Activated CD4-positive, alpha-beta T cell treated with anti-CD3 and anti-CD28 coated beads, Interleukin-2, amount 10 ng/mL, durations not matched to agents 24 days and 14 days (primary cell): ENCODE measurements at regions of chr2 and their contacts with region 1.

Region 1: GRCh38 chr2:15560988-15561573 is at the start of gene NBAS:
- DNase-seq: peak; percentile 92
- H3K4me3 Mint-ChIP-seq: peak within 1 kb of the TSS; percentile 99
- H3K27ac Mint-ChIP-seq: peak within 1 kb of the TSS; percentile 94
- H3K4me1 Mint-ChIP-seq: peaks cover 31% of the 10 kb centered on the region
- H3K27me3 Mint-ChIP-seq: peaks cover 3% of the 10 kb centered on the region
- total RNA-seq, gene NBAS: 37.4 and 38.5 TPM in 2 replicates

Region 2: DNA sequence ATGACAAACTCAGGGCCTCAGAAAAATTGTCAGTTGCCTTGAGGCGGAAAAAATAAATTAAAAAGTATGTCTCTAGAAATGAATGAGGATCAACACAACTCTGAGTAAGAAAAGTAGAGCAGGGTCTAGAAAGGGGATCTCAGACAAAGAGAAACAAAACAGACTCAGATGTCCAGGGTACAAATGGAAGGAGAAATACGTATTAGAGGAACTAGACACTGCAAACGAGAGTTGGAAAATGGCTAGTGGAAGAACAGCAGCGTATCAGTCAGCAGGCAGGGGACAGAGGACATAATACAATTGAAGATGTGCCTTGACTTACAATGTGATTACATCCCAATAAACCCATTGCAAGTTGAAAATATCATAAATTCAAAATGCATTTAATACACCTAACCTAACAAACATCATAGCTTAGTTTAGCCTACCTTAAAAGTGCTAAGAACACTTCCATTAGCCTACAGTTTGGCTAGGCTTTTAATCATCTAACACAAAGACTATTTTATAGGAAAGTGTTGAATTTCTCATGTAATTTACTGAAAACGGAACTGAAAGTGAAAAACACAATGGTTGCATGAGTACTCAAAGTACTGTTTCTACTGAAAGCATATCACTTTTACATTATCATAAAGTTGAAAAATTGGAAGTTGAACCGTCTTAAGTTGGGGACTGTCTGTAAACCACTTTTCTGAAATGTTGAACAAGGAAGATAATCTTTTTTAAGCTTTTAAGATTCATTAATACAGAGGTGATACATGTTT is 182.8 kb before region 1 on chr2:
- intact Hi-C with region 1: loop called (anchors 5 kb)
- DNase-seq: no peak
- H3K4me3 Mint-ChIP-seq: peak overlapping the region; percentile 8
- H3K27ac Mint-ChIP-seq: no peak overlapping the region
- H3K4me1 Mint-ChIP-seq: peaks cover 8% of the 10 kb centered on the region
- H3K27me3 Mint-ChIP-seq: no peaks in the 10 kb centered on the region

Region 3: DNA sequence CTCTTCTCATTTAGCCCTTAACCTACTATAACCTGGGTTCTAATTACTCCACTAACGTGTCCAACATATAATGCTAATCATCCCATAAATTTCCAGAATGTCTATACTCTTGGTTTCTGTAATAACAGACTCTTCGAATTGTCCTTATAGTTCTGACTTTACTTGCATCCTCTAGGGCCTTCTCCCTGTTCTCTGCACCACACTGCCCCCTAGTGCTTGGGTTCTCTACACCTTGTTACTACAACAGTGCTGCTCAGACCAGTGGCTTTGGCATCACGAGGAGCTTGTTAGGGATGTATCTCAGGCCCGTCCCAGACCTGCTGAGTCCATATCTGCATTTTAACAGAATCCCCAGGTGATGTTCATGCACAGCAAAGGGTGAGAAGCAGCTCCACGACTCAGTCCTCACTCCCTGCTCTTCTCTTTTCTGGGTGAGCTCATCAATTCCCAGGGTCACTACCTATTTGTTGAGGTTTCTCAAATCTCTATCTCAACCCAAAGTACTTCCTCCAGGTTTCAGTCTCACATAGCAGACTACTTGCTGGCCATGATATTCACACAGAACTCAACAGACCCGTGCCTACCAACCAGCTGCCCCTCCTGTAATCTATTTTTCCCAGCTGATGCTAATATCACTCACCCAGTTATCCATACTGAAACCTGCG is 16.1 kb after region 1 on chr2:
- intact Hi-C with region 1: no loop called
- DNase-seq: peak; percentile 96
- H3K4me3 Mint-ChIP-seq: no peak overlapping the region
- H3K27ac Mint-ChIP-seq: no peak overlapping the region
- H3K4me1 Mint-ChIP-seq: no peaks in the 10 kb centered on the region
- H3K27me3 Mint-ChIP-seq: no peaks in the 10 kb centered on the region

Region 4: GRCh38 chr2:15591692-15592463 is 30.8 kb after region 1 on chr2 and contains the start of gene DDX1:
- intact Hi-C with region 1: loop called (anchors 1 kb)
- DNase-seq: peak; percentile 96
- H3K4me3 Mint-ChIP-seq: peak within 1 kb of the TSS; percentile 89
- H3K27ac Mint-ChIP-seq: peak within 1 kb of the TSS; percentile 89
- H3K4me1 Mint-ChIP-seq: peaks cover 26% of the 10 kb centered on the region
- H3K27me3 Mint-ChIP-seq: no peaks in the 10 kb centered on the region
- total RNA-seq, gene DDX1: 116 TPM in 2 replicates

Region 5: DNA sequence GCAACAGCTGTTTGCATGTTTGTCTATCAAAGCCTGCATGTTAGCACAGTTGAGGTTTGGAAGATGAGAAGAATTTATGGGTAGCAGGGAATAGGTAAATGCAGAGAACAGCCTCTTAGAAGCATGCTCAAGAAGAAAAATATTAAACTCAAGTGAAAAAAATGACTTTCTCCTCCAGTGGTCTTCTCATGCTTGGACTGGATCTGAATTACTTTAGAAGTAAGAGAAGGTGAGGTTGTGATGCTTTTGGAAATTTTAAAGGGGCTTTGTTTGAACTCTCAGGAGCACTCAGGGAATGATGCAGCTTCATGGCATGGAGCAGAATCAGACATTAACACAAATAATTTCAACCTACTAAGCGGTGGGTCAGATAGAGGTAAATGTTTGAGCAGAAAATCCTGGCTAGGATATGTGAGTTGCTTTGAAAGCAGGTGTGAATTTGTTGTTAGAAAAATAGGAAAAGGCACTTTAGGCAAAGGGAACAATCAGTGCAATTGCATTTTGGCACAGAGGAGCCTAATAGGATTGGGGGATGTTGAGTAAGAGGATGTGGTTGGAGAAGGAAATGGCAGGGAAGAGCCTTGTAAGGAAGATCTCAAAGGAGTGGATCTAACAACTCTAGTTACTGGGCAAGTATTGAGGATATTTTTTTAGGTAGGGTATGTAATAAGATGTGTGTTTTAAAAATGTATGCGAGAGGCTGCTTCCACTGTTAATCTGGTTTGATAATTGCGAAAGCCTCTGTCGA is 106.9 kb after region 1 on chr2:
- intact Hi-C with region 1: no loop called
- DNase-seq: no peak
- H3K4me3 Mint-ChIP-seq: no peak overlapping the region
- H3K27ac Mint-ChIP-seq: no peak overlapping the region
- H3K4me1 Mint-ChIP-seq: no peaks in the 10 kb centered on the region
- H3K27me3 Mint-ChIP-seq: no peaks in the 10 kb centered on the region